MCF 10A (cell line): ENCODE measurements at regions of chr12 and their contacts with region 1.

Region 1: GRCh38 chr12:26028953-26029735 is 70.7 kb downstream of the RASSF8 start:
- DNase-seq: peak; percentile 56
- H3K4me3 Mint-ChIP-seq: no peak overlapping the region
- H3K27ac Mint-ChIP-seq: no peak overlapping the region
- H3K4me1 Mint-ChIP-seq: peaks cover 21% of the 10 kb centered on the region
- H3K27me3 Mint-ChIP-seq: no peaks in the 10 kb centered on the region
- CTCF ChIP-seq: peak; percentile 80

Region 2: DNA sequence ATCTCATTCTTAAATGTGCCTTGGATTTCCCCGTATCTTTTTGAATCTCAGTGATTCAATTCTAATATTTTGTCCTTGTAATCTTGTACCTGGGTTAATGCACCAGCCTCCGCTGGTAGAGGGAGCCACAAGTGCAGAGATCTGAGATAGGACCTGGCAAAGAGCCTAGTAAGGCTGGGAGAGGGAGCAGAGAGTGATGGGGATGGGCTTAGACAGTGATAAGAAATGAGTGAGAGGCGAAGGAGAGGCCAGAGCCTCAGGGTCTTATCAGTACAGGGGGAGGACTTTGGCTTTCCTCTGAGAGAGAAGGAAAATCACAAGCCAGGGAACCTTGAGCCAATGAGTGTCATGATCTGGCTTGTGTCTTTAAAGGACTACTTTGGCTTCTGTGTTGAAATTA is 445.6 kb before region 1 on chr12:
- CTCF ChIA-PET with region 1: interaction called, 5 read pairs
- POLR2A ChIA-PET with region 1: no interaction called
- intact Hi-C with region 1: loop called (anchors 1 kb)
- DNase-seq: peak; percentile 58
- H3K4me3 Mint-ChIP-seq: no peak overlapping the region
- H3K27ac Mint-ChIP-seq: peak overlapping the region; percentile 2
- H3K4me1 Mint-ChIP-seq: peaks cover 27% of the 10 kb centered on the region
- H3K27me3 Mint-ChIP-seq: no peaks in the 10 kb centered on the region
- CTCF ChIP-seq: peak; percentile 22

Region 3: GRCh38 chr12:25677232-25677937 is 351.8 kb before region 1 on chr12:
- CTCF ChIA-PET with region 1: interaction called, 5 read pairs
- POLR2A ChIA-PET with region 1: no interaction called
- intact Hi-C with region 1: loop called (anchors 1 kb)
- DNase-seq: peak; percentile 7
- H3K4me3 Mint-ChIP-seq: no peak overlapping the region
- H3K27ac Mint-ChIP-seq: no peak overlapping the region
- H3K4me1 Mint-ChIP-seq: peaks cover 3% of the 10 kb centered on the region
- H3K27me3 Mint-ChIP-seq: no peaks in the 10 kb centered on the region
- CTCF ChIP-seq: peak; percentile 23

Region 4: DNA sequence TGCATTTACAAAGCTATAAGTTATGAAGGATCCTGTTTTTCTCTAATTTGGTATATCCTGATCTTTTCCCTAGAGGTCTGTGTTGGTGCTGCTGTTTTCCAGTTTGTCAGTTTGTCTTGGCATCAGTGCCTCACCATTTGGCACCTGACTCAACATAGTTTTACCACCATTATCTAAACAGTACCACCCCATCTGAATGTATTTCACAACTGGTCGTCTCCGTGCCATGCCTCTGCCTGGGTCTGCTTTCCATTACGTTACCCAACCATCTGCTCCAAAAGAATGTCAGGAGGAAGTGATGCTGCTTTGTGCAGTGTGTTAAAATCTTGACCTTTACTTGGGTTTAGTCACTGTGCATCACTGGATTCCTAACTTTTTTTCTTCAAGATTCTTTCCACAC is 200.0 kb before region 1 on chr12:
- CTCF ChIA-PET with region 1: no interaction called
- POLR2A ChIA-PET with region 1: no interaction called
- intact Hi-C with region 1: loop called (anchors 5 kb)
- DNase-seq: peak; percentile 96
- H3K4me3 Mint-ChIP-seq: no peak overlapping the region
- H3K27ac Mint-ChIP-seq: peak overlapping the region; percentile 1
- H3K4me1 Mint-ChIP-seq: peaks cover 16% of the 10 kb centered on the region
- H3K27me3 Mint-ChIP-seq: no peaks in the 10 kb centered on the region
- CTCF ChIP-seq: no peak